ENCODE measurements at regions of chr4 and their contacts with region 1.

Region 1: GRCh38 chr4:1289207-1290164 is at the start of gene MAEA:
- DNase-seq: peak; percentile 97 to 99 (median 98)
- H3K4me3 ChIP-seq: peak within 1 kb of the TSS; percentile 33 to 100 (median 92)
- H3K27ac ChIP-seq: peak within 1 kb of the TSS; percentile 28 to 99 (median 91)
- H3K4me1 ChIP-seq: peaks cover 14 to 43% of the 10 kb centered on the region in 2 donors
- H3K27me3 ChIP-seq: no peaks in the 10 kb centered on the region
- CTCF ChIP-seq: no peak
- POLR2A ChIP-seq: peak; percentile 54 to 83
- total RNA-seq, gene MAEA: 50.2 to 96.8 (median 78.7) TPM

Region 2: DNA sequence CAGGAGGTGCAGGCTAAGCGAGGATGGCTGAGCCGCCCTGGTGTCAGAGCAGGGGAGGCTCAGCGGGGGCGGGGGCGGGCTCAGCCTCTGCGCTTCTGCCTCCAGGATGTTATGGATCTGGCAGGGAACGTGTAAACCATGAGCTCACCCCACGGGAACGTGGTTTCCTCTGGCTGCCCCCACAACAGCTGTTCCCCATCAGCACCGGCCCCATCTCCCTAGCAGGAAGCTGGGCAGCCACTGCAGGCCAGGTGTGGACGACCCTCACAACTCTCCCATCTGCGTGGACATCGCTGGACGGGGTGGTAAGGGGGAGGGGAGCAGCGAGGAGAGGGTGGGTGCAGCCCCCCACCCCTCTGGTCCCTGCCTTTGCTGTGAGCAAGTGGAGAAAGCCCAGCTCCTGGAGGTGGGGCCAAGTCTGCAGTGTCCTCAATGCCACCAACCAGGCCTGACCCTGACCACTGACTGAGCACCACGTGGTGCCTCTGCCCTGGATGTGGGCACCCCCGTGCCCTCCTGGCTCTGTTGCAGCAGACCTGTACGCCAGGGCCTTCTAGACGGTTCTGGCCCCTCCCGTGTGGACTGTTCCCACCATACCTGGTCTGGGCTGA is 89.0 kb before region 1 on chr4:
- intact Hi-C with region 1: no loop called
- DNase-seq: peak in 4 of 7 donors; percentile 34 to 61 (median 41)
- H3K4me3 ChIP-seq: peak overlapping the region in 1 of 4 donors; percentile 26
- H3K27ac ChIP-seq: peak overlapping the region in 3 of 5 donors; percentile 0 to 91 (median 67)
- H3K4me1 ChIP-seq: peaks cover 0 to 24% of the 10 kb centered on the region in 2 donors
- H3K27me3 ChIP-seq: no peaks in the 10 kb centered on the region
- CTCF ChIP-seq: no peak
- POLR2A ChIP-seq: no peak

Region 3: DNA sequence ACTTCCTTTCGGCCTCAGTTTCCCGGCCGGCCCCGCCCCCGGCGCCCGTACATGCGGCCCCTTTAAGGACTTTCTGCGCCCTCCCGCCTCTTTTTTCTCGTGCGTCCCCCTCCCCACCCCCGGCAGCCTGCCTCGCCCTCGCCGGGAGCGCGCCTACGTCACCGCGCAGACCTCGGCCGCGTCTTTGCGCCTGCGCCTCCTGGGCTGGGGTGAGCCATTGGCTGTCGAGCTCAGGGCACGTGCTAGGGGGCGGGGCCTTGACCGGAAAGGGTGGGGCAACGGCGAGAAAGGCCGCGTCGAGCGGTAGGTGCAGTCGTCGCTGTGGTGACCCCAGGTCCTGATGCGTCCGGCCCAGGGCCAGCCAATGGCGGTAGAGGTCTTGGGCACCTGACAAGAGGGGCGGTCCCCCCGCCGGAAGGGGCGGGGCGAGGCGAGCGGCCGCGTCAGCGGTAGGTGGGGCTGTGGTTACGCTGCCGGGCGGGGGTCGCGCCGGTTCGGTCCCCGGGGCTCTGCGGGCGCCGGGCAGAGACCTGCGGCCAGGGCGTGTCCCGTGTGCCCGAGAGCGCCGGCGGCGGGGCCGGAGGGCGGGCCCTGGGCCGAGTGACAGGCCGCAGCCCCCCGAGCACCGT is 57.4 kb after region 1 on chr4 and contains the start of gene UVSSA:
- intact Hi-C with region 1: loop called (anchors 5 to 10 kb)
- DNase-seq: peak; percentile 100
- H3K4me3 ChIP-seq: peak within 1 kb of the TSS; percentile 59 to 88 (median 73)
- H3K27ac ChIP-seq: peak within 1 kb of the TSS; percentile 95 to 100 (median 98)
- H3K4me1 ChIP-seq: peaks cover 7 to 22% of the 10 kb centered on the region in 2 donors
- H3K27me3 ChIP-seq: no peaks in the 10 kb centered on the region
- CTCF ChIP-seq: no peak
- POLR2A ChIP-seq: peak in 1 of 2 donors; percentile 92
- total RNA-seq, gene UVSSA: 3.5 to 36.5 (median 16.7) TPM